ENCODE measurements at regions of chr20 and their contacts with region 1.

Region 1: DNA sequence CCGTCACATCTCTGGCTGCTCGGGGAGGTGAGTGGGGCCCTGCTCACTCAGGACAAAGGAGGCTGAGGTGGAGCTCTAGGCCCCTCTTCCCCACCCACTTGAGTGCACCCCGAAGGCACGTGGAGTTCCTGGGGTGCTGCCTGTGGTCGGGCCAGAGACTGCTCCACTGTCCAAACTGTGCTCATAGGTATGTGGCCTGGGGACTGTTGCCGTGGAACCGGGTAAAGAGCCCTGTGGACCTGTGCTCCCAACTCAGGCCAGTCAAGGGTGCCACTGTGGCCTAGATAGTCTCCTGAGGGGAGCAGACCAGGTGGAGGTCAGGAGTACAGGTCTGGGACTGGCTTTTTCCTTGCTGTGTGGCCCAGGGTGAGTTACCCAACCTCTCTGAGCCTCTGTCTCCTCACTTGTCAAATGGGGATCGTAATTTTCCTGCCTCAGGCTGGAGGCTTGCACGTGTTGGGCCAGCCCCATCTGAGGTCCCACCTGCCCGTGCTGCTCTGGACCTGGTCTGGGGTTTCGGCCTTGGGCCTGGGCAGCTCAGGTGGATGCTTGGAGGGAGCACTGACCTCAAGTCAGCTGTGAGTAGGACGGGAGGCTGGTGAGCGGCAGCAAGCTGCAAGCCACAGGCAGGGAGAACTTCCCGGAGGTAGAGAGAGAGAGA is 12.4 kb upstream of the NPBWR2 start:
- DNase-seq: peak; percentile 24
- H3K4me3 ChIP-seq: no peak overlapping the region
- H3K27ac ChIP-seq: no peak overlapping the region
- H3K4me1 ChIP-seq: no peaks in the 10 kb centered on the region; a peak in 1 of 4 replicates
- H3K27me3 ChIP-seq: peaks cover 28% of the 10 kb centered on the region
- CTCF ChIP-seq: no peak
- EP300 ChIP-seq: no peak
- RAD21 ChIP-seq: no peak

Region 2: DNA sequence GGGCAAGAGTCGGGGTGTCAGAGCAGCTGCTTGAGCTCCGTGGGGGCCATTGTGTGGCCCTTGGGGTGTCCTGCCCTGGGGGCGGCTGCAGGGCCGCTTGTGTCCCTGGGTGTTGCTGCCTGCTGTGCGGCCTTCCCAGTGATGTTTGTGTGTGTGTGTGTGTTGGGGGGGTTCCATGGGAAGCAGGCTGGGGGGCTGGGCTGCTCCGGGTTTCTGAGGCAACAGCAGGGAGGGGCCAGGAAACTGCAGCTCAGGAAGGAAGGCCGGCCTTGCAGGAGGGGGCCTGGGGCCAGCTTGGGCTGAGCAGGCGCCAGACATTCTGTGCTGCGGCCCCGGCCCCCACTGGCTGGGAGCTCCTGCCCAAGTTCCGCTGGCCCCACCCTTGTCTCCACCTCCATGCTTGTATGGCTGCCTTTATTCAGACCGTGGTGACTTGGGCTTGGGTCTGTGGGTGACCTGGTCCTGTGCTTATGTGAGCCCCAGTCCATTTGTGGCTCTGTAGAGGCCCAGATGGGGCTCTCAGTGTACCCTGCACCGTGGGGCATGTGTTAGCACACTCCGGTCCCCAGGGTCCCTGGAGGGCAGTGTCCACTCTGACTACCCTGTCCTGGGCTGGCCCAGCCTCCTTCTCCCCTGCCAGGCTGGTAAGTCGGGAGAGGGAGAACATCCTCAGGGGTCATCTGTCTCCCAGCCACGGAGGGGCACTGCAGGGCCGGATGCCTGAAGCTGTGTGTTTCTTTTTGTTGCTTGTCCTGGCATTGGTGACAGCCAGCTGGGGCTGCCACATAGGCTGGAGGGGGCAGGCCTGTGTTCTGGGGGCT is 65.8 kb before region 1 on chr20:
- CTCF ChIA-PET with region 1: interaction called, 15 read pairs
- POLR2A ChIA-PET with region 1: no interaction called
- DNase-seq: peak; percentile 79
- H3K4me3 ChIP-seq: no peak overlapping the region
- H3K27ac ChIP-seq: no peak overlapping the region
- H3K4me1 ChIP-seq: peaks cover 0 to 10% of the 10 kb centered on the region in 2 experiments; a peak in 1 of 4 replicates
- H3K27me3 ChIP-seq: peaks cover 6% of the 10 kb centered on the region; the same call in 1 of the 2 replicates
- CTCF ChIP-seq: peak; percentile 32
- EP300 ChIP-seq: no peak
- RAD21 ChIP-seq: peak; percentile 39

Region 3: GRCh38 chr20:64069614-64070243 is 50.1 kb before region 1 on chr20:
- CTCF ChIA-PET with region 1: interaction called, 21 read pairs
- POLR2A ChIA-PET with region 1: no interaction called
- DNase-seq: peak; percentile 89
- H3K4me3 ChIP-seq: no peak overlapping the region; a peak in 1 of 4 replicates
- H3K27ac ChIP-seq: no peak overlapping the region
- H3K4me1 ChIP-seq: peaks cover 0 to 4% of the 10 kb centered on the region in 2 experiments; a peak in 1 of 4 replicates
- H3K27me3 ChIP-seq: no peaks in the 10 kb centered on the region
- CTCF ChIP-seq: peak; percentile 76
- EP300 ChIP-seq: no peak
- RAD21 ChIP-seq: peak; percentile 41

Region 4: GRCh38 chr20:64101731-64102621 is 17.8 kb before region 1 on chr20:
- CTCF ChIA-PET with region 1: interaction called, 32 read pairs
- POLR2A ChIA-PET with region 1: no interaction called
- DNase-seq: peak; percentile 94
- H3K4me3 ChIP-seq: peak overlapping the region; percentile 27 to 46
- H3K27ac ChIP-seq: no peak overlapping the region
- H3K4me1 ChIP-seq: peaks cover 0 to 2% of the 10 kb centered on the region in 2 experiments; a peak in 1 of 4 replicates
- H3K27me3 ChIP-seq: no peaks in the 10 kb centered on the region; the same call in 1 of the 2 replicates
- CTCF ChIP-seq: peak; percentile 61
- EP300 ChIP-seq: no peak
- RAD21 ChIP-seq: peak; percentile 51

Measured in SK-N-SH (cell line).